Natural killer cell (primary cell): ENCODE measurements at regions of chr15 and their contacts with region 1.

Region 1: DNA sequence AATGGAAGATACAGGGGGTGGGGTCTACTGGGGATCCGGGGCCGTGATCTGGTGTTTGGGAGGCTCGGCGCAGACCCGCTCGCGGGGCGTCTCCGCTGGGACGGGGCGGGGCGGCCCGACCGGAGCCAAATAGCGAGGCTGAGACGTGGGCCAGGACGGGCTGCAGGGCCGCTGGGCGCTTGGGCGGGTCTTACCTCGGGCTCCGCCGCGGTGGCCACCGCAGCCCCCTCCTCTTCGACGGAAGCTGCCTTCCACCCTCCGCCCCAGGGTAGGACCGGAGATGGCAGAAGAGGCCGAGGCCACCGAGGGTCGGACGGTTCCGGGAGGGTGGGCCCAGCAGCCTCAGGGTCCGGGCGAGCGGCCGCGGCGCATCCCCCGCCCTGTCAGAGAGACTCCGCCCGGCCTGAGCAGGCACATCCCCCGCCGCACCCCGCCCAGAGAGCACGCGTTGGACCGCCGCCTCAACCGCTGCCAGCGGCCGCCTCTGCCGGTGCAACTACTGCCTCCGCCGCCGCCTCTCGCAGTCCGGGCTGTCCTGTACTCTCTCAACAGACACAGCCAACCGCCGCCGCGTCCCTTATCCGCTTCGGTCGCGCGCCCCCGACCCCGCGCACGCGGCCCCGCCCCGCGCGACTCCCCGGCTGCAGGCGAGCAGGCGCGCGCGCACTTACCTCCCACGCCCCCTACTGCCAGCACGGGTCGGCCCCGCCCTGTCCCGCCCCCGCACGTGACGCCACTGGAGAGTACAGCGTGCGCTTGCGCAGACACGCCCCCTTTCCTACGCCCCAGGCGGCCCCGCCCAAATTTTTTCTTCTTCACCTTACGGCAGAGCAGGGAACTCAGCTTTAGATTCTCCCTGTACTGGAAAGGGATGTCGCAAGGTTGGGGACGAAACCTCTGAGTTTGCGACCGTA is at the start of gene MYO9A:
- DNase-seq: peak; percentile 93 to 99
- ATAC-seq: peak; percentile 80 to 94 (median 81)
- H3K4me3 ChIP-seq: peak within 1 kb of the TSS; percentile 80
- H3K4me3 Mint-ChIP-seq: peak within 1 kb of the TSS; percentile 96
- H3K27ac ChIP-seq: peak within 1 kb of the TSS; percentile 83
- H3K27ac Mint-ChIP-seq: peak within 1 kb of the TSS; percentile 93 to 96
- H3K4me1 ChIP-seq: peaks cover 14% of the 10 kb centered on the region
- H3K4me1 Mint-ChIP-seq: peaks cover 26 to 32% of the 10 kb centered on the region in 2 donors
- H3K27me3 ChIP-seq: no peaks in the 10 kb centered on the region
- H3K27me3 Mint-ChIP-seq: no peaks in the 10 kb centered on the region
- CTCF ChIP-seq: no peak
- total RNA-seq, gene MYO9A: 36.3 to 40.4 (median 37.3) TPM

Region 2: DNA sequence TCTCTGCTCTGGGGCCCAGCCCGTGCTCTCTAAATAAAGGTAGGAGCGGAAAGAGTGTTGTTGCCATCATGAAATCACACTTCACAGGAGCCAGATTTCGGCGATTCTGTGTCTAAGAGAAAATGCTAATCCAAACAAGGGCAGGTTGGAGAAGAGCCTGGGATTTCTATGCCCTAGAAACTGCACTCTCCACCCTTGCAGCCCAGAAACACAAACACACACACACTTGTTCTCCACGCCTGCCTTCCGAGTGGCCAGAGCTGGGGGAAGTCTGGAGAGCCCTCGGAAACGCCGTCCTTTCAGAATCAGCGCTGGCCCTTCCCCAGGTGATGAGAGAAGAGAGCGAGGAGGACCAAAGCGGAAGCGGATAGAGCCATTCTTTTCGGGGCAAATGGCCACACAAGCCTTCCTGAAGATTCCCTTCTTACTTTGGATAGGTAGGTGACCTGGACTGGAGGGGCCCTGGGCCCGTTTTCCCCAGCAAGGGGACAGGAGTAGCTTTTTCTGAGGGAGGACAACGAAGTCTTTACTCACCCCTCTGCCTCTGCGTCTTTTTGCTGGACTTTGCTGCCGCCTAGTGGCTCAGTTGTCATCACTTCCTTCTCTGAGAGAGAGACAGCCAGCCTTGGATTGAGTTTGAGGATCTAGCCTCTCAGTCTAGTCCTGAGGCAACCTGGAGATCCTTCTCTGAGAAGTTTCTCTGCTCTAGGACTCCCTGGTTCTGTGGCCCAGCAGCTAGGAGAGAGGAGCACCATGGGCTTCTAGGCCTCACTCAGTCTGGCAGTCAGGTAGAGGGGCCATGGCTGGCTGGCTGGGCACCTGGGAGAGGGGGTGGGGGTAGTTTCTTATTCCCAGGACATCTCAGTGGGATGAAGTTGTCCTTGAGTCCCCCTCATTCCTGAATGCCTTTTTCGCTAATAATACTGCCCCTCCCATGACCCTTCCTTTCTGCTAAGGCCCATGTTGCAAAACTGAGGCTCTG is 38.2 kb after region 1 on chr15:
- intact Hi-C with region 1: no loop called
- DNase-seq: peak; percentile 70 to 87
- ATAC-seq: peak; percentile 77 to 95 (median 80)
- H3K4me3 ChIP-seq: peak overlapping the region; percentile 27
- H3K4me3 Mint-ChIP-seq: peak overlapping the region; percentile 85
- H3K27ac ChIP-seq: no peak overlapping the region
- H3K27ac Mint-ChIP-seq: peak overlapping the region in 1 of 2 donors; percentile 76
- H3K4me1 ChIP-seq: peaks cover 6% of the 10 kb centered on the region
- H3K4me1 Mint-ChIP-seq: peaks cover 6 to 10% of the 10 kb centered on the region in 2 donors
- H3K27me3 ChIP-seq: no peaks in the 10 kb centered on the region
- H3K27me3 Mint-ChIP-seq: no peaks in the 10 kb centered on the region
- CTCF ChIP-seq: peak; percentile 89

Region 3: GRCh38 chr15:72272213-72273002 is 154.7 kb after region 1 on chr15 and contains the start of gene PARP6:
- intact Hi-C with region 1: loop called (anchors 1 kb)
- DNase-seq: peak; percentile 95 to 99
- ATAC-seq: peak; percentile 94 to 98 (median 96)
- H3K4me3 ChIP-seq: peak within 1 kb of the TSS; percentile 82
- H3K4me3 Mint-ChIP-seq: peak within 1 kb of the TSS; percentile 91
- H3K27ac ChIP-seq: peak within 1 kb of the TSS; percentile 87
- H3K27ac Mint-ChIP-seq: peak within 1 kb of the TSS; percentile 90 to 93
- H3K4me1 ChIP-seq: peaks cover 15% of the 10 kb centered on the region
- H3K4me1 Mint-ChIP-seq: peaks cover 42% of the 10 kb centered on the region in 2 donors
- H3K27me3 ChIP-seq: no peaks in the 10 kb centered on the region
- H3K27me3 Mint-ChIP-seq: peaks cover 0 to 2% of the 10 kb centered on the region in 2 donors
- CTCF ChIP-seq: peak; percentile 30
- total RNA-seq, gene PARP6: 132 to 135 (median 132) TPM

Region 4: DNA sequence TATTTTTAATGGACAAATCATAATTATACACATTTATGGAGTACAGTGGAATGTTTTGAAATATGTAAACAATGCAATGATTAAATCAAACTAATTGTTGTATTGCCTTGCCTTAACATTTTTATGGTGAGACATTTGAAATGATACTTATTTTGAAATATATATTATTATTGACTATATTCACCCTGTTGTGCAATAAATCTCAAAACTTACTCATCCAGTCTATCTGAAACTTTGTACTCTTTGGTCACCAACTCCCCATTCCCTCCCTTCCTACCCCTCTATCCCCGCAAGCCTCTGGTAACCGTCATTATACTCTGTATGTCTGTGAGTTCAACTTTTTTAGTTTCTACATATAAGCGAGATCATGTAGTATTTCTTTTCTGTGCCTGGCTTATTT is 462.1 kb after region 1 on chr15:
- intact Hi-C with region 1: no loop called
- DNase-seq: no peak
- ATAC-seq: no peak
- H3K4me3 ChIP-seq: no peak overlapping the region
- H3K4me3 Mint-ChIP-seq: no peak overlapping the region
- H3K27ac ChIP-seq: no peak overlapping the region
- H3K27ac Mint-ChIP-seq: no peak overlapping the region
- H3K4me1 ChIP-seq: no peaks in the 10 kb centered on the region
- H3K4me1 Mint-ChIP-seq: peaks cover 0 to 5% of the 10 kb centered on the region in 2 donors
- H3K27me3 ChIP-seq: no peaks in the 10 kb centered on the region
- H3K27me3 Mint-ChIP-seq: no peaks in the 10 kb centered on the region
- CTCF ChIP-seq: no peak